ENCODE measurements at regions of chr11 and their contacts with region 1.

Region 1: DNA sequence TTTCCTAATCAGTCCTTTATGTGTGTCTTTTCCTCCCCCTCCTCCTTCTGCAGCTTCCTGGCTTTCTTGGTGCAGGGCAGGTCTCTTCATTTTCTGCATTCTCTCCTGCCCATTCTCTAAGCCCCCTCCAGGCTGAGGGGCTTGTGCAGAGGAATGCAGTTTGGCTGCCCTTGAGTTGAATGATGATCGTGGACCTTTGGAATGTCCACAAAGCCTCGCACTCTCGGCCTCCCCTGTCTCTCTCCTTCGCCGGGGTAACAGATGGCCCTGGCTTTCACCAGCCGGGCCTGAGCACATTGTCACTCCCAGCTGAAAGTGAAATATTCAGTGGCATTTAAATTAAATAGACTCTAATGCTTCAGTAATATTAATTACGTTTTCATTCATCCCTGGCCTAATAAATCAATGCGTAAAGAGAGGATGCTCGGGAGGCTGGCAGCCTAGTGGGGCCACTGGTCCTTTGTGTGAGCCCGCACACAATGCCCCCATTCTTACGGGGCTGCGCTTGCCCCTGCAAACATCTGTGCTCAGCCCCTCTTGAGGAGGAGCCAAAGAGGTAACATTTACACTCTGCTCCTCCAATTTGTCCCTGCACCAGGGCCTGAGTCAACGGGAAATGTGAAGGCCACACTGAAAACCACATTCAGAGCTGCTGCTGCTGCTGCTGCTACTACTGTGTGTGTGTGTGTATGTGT is 64.9 kb upstream of the PAX6 start:
- DNase-seq: no peak
- ATAC-seq: no peak
- H3K4me3 ChIP-seq: no peak overlapping the region
- H3K27ac ChIP-seq: no peak overlapping the region
- H3K4me1 ChIP-seq: no peaks in the 10 kb centered on the region
- H3K27me3 ChIP-seq: peaks cover 3 to 37% (median 6%) of the 10 kb centered on the region in 3 donors
- CTCF ChIP-seq: no peak

Region 2: GRCh38 chr11:31233424-31233823 is 642.6 kb before region 1 on chr11:
- intact Hi-C with region 1: loop called (anchors 5 kb)
- DNase-seq: no peak
- ATAC-seq: no peak
- H3K4me3 ChIP-seq: no peak overlapping the region
- H3K27ac ChIP-seq: no peak overlapping the region
- H3K4me1 ChIP-seq: no peaks in the 10 kb centered on the region
- H3K27me3 ChIP-seq: no peaks in the 10 kb centered on the region
- CTCF ChIP-seq: no peak